Endothelial cell of umbilical vein (primary cell): ENCODE measurements at regions of chr12 and their contacts with region 1.

Region 1: GRCh38 chr12:131830335-131830913 is 2.2 kb downstream of the MMP17 start:
- DNase-seq: peak; percentile 70
- H3K4me3 ChIP-seq: peak overlapping the region; percentile 30 to 53 (median 35)
- H3K27ac ChIP-seq: no peak overlapping the region
- H3K4me1 ChIP-seq: peaks cover 12% of the 10 kb centered on the region
- H3K27me3 ChIP-seq: peaks cover 0 to 6% of the 10 kb centered on the region in 2 experiments
- CTCF ChIP-seq: peak; percentile 62 to 74
- POLR2A ChIP-seq: no peak

Region 2: DNA sequence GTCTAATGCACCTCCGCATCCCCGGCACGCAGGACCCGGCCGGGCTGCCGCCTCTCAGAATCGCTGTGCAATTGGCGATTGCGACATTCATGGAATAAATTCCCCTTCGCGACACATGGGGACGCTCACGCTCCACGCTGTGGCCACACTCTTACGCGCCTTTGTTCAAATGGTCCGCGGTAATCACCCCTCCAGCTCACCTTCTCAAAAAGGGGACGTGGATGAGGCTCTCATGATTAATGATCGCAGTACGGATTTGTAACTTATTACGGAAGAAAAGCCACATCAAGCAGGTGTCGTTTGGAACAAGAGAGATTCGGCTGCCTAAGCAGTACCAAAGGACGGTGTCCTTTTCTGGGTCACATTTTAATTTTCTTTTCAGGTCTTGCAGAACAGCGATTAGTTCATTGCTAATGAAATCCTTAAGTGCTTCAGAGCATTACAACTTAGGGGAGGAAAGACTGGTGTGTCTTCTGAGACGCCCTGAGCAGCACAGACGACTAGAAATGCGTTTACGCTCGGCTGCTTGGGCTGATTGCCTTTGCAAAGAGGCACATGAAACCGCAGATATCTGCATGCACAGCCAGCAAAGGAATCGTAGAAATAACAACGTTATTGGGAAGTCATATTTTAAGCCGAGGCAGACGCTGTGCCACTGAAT is 914.0 kb before region 1 on chr12:
- CTCF ChIA-PET with region 1: no interaction called
- POLR2A ChIA-PET with region 1: no interaction called
- dilution Hi-C with region 1: no loop called
- intact Hi-C with region 1: loop called (anchors 2 kb)
- DNase-seq: peak; percentile 6
- H3K4me3 ChIP-seq: no peak overlapping the region
- H3K27ac ChIP-seq: no peak overlapping the region
- H3K4me1 ChIP-seq: no peaks in the 10 kb centered on the region
- H3K27me3 ChIP-seq: no peaks in the 10 kb centered on the region
- CTCF ChIP-seq: peak; percentile 43 to 46
- POLR2A ChIP-seq: no peak

Region 3: DNA sequence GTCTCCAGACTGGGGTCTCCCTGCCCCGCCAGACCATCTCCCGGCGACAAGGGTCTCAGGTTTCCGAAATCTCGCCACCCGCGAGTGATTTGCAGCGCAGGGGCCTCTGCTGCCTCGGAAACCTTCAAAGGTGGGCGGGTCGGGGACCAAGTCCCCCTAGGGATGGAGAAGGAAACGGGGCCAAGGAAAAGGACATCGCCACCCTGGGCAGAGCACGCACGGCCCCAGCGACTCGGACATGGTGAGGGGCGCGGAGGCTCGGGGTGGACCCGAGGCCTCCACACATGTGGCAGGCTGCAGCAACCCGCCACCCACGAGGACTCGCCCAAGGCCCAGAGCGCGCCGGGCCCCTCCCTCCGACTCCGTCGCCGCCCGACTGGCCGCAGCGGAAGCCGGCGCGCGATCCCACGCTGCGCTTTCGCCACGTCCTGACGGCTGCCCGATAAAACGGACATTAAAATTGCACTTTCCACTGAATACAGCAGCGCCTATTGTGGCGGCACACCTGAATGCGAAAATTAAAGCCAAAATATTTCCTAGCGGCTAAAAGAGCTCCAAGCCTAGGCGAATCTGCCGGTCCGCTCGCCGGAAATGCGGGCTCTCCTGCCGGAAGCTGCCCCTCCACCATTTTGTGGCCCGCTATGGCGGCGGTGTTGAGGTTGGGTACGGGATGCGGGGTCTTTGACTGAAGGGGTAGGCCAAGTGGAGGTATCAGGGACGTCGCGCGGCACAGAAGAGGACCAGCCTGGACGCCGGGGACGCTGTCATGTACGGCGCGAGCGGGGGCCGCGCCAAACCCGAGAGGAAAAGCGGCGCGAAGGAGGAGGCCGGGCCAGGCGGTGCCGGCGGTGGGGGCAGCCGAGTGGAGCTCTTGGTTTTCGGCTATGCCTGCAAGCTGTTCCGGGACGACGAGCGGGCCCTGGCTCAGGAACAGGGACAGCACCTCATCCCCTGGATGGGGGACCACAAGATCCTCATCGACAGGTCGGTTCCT is 119.7 kb before region 1 on chr12 and contains the start of gene SFSWAP:
- CTCF ChIA-PET with region 1: no interaction called
- POLR2A ChIA-PET with region 1: no interaction called
- dilution Hi-C with region 1: no loop called
- intact Hi-C with region 1: loop called (anchors 2 kb)
- DNase-seq: peak; percentile 80
- H3K4me3 ChIP-seq: peak within 1 kb of the TSS; percentile 56 to 81 (median 60)
- H3K27ac ChIP-seq: peak within 1 kb of the TSS; percentile 98
- H3K4me1 ChIP-seq: peaks cover 16% of the 10 kb centered on the region
- H3K27me3 ChIP-seq: no peaks in the 10 kb centered on the region
- CTCF ChIP-seq: no peak
- POLR2A ChIP-seq: peak; percentile 79
- total RNA-seq, gene SFSWAP: 53.1 and 53.3 TPM in 2 replicates

Region 4: GRCh38 chr12:131783915-131784541 is 46.4 kb before region 1 on chr12:
- CTCF ChIA-PET with region 1: interaction called, 5 read pairs
- POLR2A ChIA-PET with region 1: no interaction called
- dilution Hi-C with region 1: no loop called
- intact Hi-C with region 1: loop called (anchors 1 kb)
- DNase-seq: no peak
- H3K4me3 ChIP-seq: no peak overlapping the region
- H3K27ac ChIP-seq: peak overlapping the region; percentile 55
- H3K4me1 ChIP-seq: no peaks in the 10 kb centered on the region
- H3K27me3 ChIP-seq: no peaks in the 10 kb centered on the region
- CTCF ChIP-seq: no peak
- POLR2A ChIP-seq: no peak

Region 5: GRCh38 chr12:131949431-131950181 is 119.2 kb after region 1 on chr12 and contains the start of gene EP400:
- CTCF ChIA-PET with region 1: no interaction called
- POLR2A ChIA-PET with region 1: no interaction called
- dilution Hi-C with region 1: no loop called
- intact Hi-C with region 1: loop called (anchors 2 kb)
- DNase-seq: peak; percentile 92
- H3K4me3 ChIP-seq: peak within 1 kb of the TSS; percentile 50 to 82 (median 77)
- H3K27ac ChIP-seq: peak within 1 kb of the TSS; percentile 82
- H3K4me1 ChIP-seq: peaks cover 5% of the 10 kb centered on the region
- H3K27me3 ChIP-seq: no peaks in the 10 kb centered on the region
- CTCF ChIP-seq: peak; percentile 21 to 27
- POLR2A ChIP-seq: peak; percentile 69
- total RNA-seq, gene EP400: 57.3 and 57.7 TPM in 2 replicates